Natural killer cell (primary cell): ENCODE measurements at regions of chr22 and their contacts with region 1.

Region 1: DNA sequence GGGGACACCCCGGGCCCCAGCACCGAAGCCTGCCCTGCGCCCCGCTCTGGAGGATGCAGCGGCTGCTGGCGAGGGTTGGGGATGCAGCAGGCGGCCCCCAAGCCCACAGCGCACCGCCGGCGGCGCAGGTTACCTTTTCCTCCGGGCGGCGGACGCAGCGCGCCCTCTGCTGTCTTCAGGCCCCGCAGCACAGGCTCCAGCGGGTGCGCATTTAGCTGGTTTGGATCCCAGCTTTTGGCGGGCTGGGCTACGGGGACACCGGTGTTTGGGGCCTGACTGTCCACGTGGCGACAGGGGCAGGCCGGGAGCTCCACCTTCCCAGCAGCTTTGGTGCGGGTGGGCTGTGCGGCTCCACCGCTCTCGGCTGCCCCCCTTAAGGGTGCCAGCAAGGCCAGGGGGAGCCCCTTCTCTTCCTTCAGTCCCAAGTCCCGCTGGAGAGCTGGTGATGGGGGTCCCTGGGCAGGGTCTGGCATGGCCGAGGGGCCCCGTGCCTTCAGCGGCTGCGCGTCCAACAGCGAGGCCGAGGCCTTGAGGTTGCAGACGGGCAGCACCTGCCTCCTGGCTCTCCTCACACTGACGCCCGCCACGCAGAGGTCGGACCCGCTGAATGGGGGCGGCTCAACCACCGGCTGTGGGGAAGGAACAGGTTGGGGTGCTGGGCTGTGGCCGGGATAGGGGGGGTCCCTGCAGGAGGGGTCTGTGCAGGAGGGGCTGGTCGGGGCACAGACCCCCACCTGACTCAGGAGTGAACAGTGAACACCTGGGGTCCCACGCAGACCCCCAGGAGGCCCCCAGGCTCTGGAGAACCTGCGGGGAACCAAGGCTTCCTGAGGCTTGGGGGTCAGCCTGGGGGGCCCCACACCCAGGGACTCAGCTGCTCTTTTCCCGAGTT is 18.0 kb upstream of the IL17REL start:
- DNase-seq: peak; percentile 80 to 90
- ATAC-seq: peak; percentile 92 to 96 (median 94)
- H3K4me3 ChIP-seq: no peak overlapping the region
- H3K4me3 Mint-ChIP-seq: no peak overlapping the region
- H3K27ac ChIP-seq: no peak overlapping the region
- H3K27ac Mint-ChIP-seq: no peak overlapping the region
- H3K4me1 ChIP-seq: peaks cover 36% of the 10 kb centered on the region
- H3K4me1 Mint-ChIP-seq: peaks cover 0 to 6% of the 10 kb centered on the region in 2 donors
- H3K27me3 ChIP-seq: peaks cover 8% of the 10 kb centered on the region
- H3K27me3 Mint-ChIP-seq: no peaks in the 10 kb centered on the region
- CTCF ChIP-seq: peak; percentile 81

Region 2: DNA sequence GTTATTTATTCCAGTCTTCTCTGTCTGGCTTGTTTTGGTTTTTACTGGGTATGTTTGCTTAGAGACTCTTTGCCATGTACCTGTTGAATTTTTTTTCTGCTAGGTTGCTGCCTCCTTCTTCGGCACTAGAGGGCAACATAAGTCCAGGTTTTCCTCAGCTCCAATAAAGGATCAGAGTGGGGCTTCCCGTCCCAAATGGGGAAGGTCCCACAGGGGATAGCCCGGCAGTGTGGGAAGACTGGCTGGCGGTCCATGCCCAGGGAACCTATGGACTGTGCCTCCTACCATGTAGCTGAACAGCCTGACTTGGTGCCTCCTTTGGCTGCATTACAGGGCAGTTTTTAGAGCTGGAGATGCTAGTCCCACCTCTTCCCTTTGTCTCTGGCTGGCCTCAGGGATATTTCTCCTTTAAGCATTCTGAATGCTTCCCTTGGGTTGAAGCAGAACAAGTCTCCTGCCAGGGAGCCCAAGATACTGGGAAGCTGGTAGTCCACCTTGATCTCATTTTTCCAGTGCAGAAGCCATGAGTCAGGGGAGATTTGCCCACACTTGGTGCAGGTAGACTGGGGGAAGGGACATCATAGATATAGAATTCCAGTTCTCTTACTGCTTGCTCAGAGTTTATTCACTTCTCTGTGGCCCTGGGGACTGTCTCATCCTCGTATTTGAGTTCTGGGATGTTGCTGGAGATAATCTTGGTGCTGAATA is 263.0 kb before region 1 on chr22:
- intact Hi-C with region 1: loop called (anchors 1 kb)
- DNase-seq: peak; percentile 15 to 71
- ATAC-seq: peak; percentile 47 to 70 (median 53)
- H3K4me3 ChIP-seq: no peak overlapping the region
- H3K4me3 Mint-ChIP-seq: no peak overlapping the region
- H3K27ac ChIP-seq: no peak overlapping the region
- H3K27ac Mint-ChIP-seq: no peak overlapping the region
- H3K4me1 ChIP-seq: no peaks in the 10 kb centered on the region
- H3K4me1 Mint-ChIP-seq: peaks cover 0 to 5% of the 10 kb centered on the region in 2 donors
- H3K27me3 ChIP-seq: no peaks in the 10 kb centered on the region
- H3K27me3 Mint-ChIP-seq: no peaks in the 10 kb centered on the region
- CTCF ChIP-seq: peak; percentile 50

Region 3: DNA sequence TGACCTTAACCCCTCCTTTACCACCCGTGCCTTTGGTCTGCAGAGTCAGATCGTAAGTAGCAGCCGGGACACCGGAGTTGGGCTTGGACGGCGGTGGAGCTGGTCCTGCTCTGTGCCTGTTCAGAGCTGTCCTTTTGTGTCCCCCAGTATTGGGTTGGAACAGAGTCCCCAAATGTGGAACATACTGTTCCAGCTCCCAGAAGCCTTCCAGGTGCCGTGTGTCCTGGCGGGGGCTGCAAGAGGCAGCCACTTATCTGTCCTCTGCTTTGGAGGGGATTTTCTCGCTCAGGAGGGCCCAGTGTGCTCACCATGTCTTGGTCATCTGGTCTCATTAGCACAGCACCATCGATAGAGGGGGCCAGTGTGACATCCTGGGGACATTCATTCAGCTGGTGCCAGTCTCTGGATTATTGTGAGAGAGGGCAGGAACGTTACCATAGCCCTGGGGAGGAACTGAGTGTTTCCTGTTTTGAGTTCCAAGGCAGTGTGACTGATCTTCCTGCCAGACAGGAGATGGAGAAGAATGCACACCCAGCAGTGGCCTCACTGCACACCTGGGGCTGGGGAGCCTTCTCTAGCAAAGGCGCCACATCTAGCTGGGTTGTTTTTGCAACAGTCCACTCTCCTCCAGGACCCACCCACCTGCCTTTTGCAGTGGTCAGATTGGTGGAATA is 99.7 kb before region 1 on chr22:
- intact Hi-C with region 1: loop called (anchors 1 kb)
- DNase-seq: peak in 1 of 2 donors; percentile 74
- ATAC-seq: peak in 1 of 3 donors; percentile 36
- H3K4me3 ChIP-seq: no peak overlapping the region
- H3K4me3 Mint-ChIP-seq: no peak overlapping the region
- H3K27ac ChIP-seq: peak overlapping the region; percentile 44
- H3K27ac Mint-ChIP-seq: peak overlapping the region in 1 of 2 donors; percentile 73
- H3K4me1 ChIP-seq: peaks cover 53% of the 10 kb centered on the region
- H3K4me1 Mint-ChIP-seq: peaks cover 16 to 21% of the 10 kb centered on the region in 2 donors
- H3K27me3 ChIP-seq: no peaks in the 10 kb centered on the region
- H3K27me3 Mint-ChIP-seq: no peaks in the 10 kb centered on the region
- CTCF ChIP-seq: peak; percentile 19

Region 4: GRCh38 chr22:49992921-49993648 is 37.5 kb before region 1 on chr22:
- intact Hi-C with region 1: loop called (anchors 1 kb)
- DNase-seq: peak; percentile 55 to 87
- ATAC-seq: peak; percentile 83 to 99 (median 93)
- H3K4me3 ChIP-seq: no peak overlapping the region
- H3K4me3 Mint-ChIP-seq: no peak overlapping the region
- H3K27ac ChIP-seq: no peak overlapping the region
- H3K27ac Mint-ChIP-seq: no peak overlapping the region
- H3K4me1 ChIP-seq: peaks cover 15% of the 10 kb centered on the region
- H3K4me1 Mint-ChIP-seq: peaks cover 5 to 6% of the 10 kb centered on the region in 2 donors
- H3K27me3 ChIP-seq: no peaks in the 10 kb centered on the region
- H3K27me3 Mint-ChIP-seq: peaks cover 11 to 14% of the 10 kb centered on the region in 2 donors
- CTCF ChIP-seq: peak; percentile 59

Region 5: DNA sequence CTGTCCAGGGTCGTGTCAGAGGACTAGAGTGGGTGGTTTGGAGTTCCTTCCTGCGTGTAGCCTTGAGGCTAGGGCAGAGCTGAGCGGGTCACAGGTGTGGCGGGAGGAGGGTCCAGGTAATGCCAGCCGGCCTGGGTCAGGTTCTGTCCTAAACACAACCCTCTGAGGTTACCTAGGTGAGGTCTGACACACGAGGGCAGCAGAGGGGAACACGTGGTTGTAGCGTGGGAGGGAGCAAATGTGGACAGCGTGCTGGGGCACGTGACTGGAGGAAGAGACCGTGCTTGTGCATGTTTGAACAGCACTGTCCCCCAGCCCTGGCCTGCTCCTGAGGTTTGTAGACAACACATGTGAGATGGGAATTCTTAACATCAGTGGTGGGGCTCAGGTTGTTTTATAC is 72.4 kb after region 1 on chr22:
- intact Hi-C with region 1: no loop called
- DNase-seq: no peak
- ATAC-seq: peak; percentile 24 to 57 (median 44)
- H3K4me3 ChIP-seq: no peak overlapping the region
- H3K4me3 Mint-ChIP-seq: peak overlapping the region; percentile 40
- H3K27ac ChIP-seq: no peak overlapping the region
- H3K27ac Mint-ChIP-seq: peak overlapping the region; percentile 66 to 80
- H3K4me1 ChIP-seq: peaks cover 24% of the 10 kb centered on the region
- H3K4me1 Mint-ChIP-seq: peaks cover 30 to 38% of the 10 kb centered on the region in 2 donors
- H3K27me3 ChIP-seq: no peaks in the 10 kb centered on the region
- H3K27me3 Mint-ChIP-seq: peaks cover 0 to 2% of the 10 kb centered on the region in 2 donors
- CTCF ChIP-seq: no peak